Gastrocnemius medialis (tissue), 4 donors: ENCODE measurements at regions of chr6 and their contacts with region 1.

Region 1: DNA sequence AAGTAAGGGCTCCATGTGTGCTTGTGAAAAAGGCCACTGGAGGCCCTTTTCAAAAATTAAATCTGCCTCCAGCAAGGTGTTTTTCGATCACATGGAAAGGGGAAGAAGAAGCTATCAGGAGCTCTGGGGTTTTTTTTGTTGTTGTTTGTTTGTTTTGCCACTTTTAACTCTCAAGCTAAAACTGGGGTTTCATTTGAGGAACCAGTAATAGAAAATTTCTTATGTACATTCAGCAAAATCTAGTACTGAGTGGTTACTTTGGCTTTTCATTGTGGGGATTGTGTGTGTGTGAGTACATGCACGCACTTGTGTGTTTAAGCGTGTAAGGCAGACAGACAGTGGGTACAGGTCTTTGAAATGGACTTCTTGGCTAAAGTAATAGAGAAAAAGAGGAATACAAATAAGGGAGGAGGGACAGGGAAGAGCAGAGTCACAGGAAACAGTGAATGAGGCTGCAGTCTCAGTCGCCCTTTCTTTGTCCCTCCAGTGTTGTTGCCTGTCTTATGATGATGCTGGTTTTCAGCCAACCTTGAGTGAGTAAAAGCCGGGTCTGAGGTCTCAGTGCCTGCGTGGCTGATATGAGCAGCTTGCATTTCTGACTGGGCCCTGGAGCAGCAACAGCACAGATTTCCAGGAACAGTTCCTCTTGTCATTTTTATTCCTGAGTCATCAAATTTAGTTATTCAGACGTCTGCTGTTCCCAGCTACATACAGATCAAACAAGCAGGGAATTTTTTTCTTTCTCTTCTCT is 26.2 kb downstream of the SLC16A10 start:
- DNase-seq: peak; percentile 73 to 74
- ATAC-seq: peak; percentile 95 to 96
- H3K4me3 ChIP-seq: peak overlapping the region in 1 of 4 donors; percentile 8
- H3K27ac ChIP-seq: peak overlapping the region; percentile 88 to 98 (median 92)
- H3K4me1 ChIP-seq: peaks cover 45 to 50% of the 10 kb centered on the region in 2 donors
- H3K27me3 ChIP-seq: no peaks in the 10 kb centered on the region
- CTCF ChIP-seq: no peak
- POLR2A ChIP-seq: peak in 1 of 2 donors; percentile 57

Region 2: DNA sequence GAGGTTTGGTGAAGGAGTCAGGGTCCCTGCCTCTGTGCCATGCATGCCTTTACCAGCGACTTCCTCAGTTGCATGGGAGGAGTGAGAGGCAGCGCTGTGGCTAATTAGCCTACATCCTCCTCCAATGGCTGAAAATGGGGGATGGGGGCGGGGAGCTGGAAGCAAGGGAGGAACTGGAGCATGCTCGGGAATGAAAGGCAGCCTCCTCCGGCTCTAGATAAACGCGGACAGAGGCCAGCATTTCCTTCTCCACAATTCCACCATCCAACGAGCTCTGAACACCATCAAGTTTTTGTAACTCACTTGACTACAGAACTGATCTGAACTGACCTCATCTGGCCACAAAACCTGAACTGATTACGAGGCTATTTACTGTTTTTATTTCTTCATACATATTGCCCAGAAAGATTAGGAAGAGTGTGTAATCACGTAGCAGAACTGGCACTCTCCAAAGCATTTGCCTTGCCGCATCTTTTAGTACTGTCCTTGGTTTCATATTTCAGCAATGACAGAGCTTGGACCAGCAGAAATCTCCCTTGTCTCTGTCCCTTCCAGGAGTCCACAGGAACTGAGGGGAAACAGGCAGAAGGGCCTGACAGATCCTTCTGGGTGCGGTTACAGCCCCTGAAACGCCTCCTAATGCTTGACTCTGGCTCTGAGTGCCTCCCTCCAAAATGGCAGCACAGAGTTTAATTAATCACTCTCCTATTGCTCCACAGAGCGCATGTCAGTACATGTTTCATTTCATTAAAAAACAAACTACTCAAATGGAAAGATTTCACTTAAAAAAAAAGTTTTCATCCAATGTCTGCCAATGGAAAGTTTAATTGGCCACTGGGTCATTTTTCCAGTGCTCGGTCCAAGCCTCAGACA is 550.4 kb after region 1 on chr6:
- in situ Hi-C with region 1: loop called in 1 of 4 experiments (anchors 25 kb)
- intact Hi-C with region 1: no loop called
- DNase-seq: peak; percentile 56 to 77
- ATAC-seq: peak; percentile 63 to 64
- H3K4me3 ChIP-seq: peak overlapping the region; percentile 12 to 52 (median 22)
- H3K27ac ChIP-seq: peak overlapping the region; percentile 88 to 96 (median 95)
- H3K4me1 ChIP-seq: peaks cover 78 to 83% of the 10 kb centered on the region in 2 donors
- H3K27me3 ChIP-seq: no peaks in the 10 kb centered on the region
- CTCF ChIP-seq: peak in 1 of 5 experiments; percentile 6
- POLR2A ChIP-seq: peak; percentile 11 to 59